HepG2 (cell line): ENCODE measurements at regions of chr1 and their contacts with region 1.

Region 1: GRCh38 chr1:237386362-237387143 is 344.6 kb downstream of the RYR2 start:
- DNase-seq: peak; percentile 17
- ATAC-seq: peak; percentile 30; the same call in 1 of the 3 replicates
- H3K4me3 ChIP-seq: no peak overlapping the region
- H3K27ac ChIP-seq: no peak overlapping the region
- H3K4me1 ChIP-seq: no peaks in the 10 kb centered on the region
- H3K27me3 ChIP-seq: peaks cover 0 to 2% of the 10 kb centered on the region in 2 experiments; a peak in 1 of 5 replicates
- CTCF ChIP-seq: peak; percentile 62
- EP300 ChIP-seq: no peak
- POLR2A ChIP-seq: no peak
- RAD21 ChIP-seq: peak; percentile 35; the same call in 1 of the 2 replicates

Region 2: DNA sequence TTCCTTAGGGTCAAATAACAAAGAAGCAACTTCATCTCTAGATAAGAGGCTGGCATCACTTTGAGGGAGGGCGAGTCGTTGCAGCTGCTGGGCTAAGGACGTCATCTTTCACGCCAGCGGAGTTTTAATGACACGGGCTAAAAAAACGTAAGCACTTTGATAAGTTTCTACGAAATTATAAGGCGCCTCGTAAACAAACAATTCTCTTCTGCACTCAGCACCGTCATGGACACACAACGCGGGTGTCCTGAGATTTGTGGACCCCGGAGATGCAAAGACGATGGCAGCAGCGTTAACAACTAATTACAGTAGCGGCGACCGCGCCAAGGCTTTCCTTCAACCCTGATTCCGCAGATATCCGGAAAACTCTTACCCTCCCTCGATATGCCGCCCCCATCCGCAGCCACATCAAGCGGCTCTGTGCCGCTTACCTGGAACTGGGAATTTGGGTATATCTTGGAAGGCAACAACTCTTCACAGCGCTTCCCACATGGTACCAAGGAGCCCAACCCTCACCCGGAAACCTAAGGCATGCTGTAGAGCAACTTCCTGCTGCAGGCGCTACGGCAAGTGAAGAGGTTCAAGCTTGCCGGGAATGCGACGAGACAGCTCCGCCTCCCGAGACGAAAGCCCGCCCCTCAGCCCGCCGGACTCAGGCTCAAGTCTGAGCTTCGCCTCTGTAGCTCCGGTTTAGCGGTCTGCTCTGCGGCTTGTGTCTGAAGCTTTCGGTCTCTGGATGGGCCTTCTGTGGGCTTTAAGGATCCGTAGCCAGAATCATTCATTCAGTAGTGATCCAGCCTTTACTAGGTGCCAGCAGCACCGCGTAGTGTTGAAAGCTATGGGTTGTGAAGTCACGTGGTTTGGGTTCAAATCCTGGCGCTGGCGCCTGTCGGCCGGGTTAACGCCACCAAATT is 782.3 kb before region 1 on chr1 and contains the start of gene HEATR1:
- CTCF ChIA-PET with region 1: interaction called, 17 read pairs
- POLR2A ChIA-PET with region 1: no interaction called
- in situ Hi-C with region 1: loop called (anchors 10 kb)
- intact Hi-C with region 1: loop called (anchors 1 kb)
- DNase-seq: peak; percentile 90
- ATAC-seq: peak; percentile 99
- H3K4me3 ChIP-seq: peak within 1 kb of the TSS; percentile 75 to 87 (median 82)
- H3K27ac ChIP-seq: peak within 1 kb of the TSS; percentile 54
- H3K4me1 ChIP-seq: peaks cover 15% of the 10 kb centered on the region
- H3K27me3 ChIP-seq: no peaks in the 10 kb centered on the region; a peak in 1 of 5 replicates
- CTCF ChIP-seq: no peak
- EP300 ChIP-seq: no peak; a peak in 1 of 4 replicates
- POLR2A ChIP-seq: peak; percentile 85
- RAD21 ChIP-seq: no peak
- total RNA-seq, gene HEATR1: 45.8 and 80.3 TPM in 2 replicates

Region 3: DNA sequence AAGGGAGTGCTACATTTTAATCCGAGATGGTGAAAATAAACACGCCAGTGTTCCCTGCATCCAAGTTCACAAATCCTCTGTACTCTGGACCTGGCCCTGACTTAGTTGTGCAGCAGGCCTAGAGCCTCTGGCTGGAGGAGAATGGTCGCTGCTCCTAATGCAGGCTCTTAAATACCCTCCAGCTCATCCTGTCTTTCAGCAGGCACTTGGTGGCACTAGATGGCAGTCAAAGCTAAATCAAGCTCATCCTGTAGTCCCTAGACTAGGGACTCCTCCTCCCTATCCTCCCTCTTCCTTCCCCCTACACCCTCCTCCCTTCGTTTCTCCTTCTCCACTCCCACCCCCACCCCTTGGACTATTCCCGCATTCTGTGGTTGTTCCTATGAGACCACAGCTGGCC is 633.0 kb before region 1 on chr1:
- CTCF ChIA-PET with region 1: interaction called, 6 read pairs
- POLR2A ChIA-PET with region 1: no interaction called
- in situ Hi-C with region 1: loop called (anchors 10 kb)
- intact Hi-C with region 1: loop called (anchors 2 kb)
- DNase-seq: peak; percentile 63
- ATAC-seq: peak; percentile 97
- H3K4me3 ChIP-seq: no peak overlapping the region
- H3K27ac ChIP-seq: no peak overlapping the region
- H3K4me1 ChIP-seq: peaks cover 16% of the 10 kb centered on the region
- H3K27me3 ChIP-seq: peaks cover 0 to 6% of the 10 kb centered on the region in 2 experiments; a peak in 1 of 5 replicates
- CTCF ChIP-seq: peak; percentile 86
- EP300 ChIP-seq: no peak
- POLR2A ChIP-seq: no peak
- RAD21 ChIP-seq: peak; percentile 67; the same call in 1 of the 2 replicates

Region 4: DNA sequence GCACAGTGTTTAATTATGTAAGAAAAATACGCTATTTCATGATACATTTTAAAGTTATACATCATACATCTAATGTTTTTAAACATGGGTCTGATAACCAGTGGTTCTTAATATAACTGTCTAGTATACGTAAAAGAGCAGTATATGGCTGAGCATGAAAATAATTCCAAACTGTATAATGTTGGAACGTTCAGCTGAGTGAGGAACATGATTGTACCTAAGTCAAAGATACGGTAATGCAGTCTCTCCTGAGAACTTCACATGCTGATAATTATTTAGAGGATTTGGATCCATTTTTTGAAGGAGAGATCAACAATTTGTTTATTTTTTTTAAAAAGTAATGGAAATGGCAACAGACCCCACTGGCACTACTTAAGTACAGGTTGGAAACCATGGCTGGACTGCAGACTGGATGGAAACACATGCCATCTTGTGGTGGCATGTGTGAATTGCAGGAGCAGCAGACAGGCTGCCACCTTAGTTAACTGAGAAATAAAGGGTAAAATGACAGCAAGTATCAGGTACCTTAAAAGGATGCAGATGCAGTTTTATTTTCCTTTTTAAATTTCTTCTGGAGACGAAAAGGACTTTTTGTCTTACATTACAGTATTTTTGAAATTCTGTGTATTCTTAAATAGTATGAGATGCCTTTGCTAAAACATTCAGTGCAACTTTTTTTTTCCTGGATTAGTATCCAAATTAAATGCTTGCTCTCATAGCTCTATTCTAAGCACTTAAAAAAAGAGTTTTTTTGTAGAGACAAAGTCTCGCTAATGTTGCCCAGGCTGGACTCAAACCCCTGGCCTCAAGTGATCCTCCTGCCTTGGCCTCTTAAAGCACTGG is 517.7 kb before region 1 on chr1:
- CTCF ChIA-PET with region 1: no interaction called
- POLR2A ChIA-PET with region 1: no interaction called
- in situ Hi-C with region 1: no loop called
- intact Hi-C with region 1: loop called (anchors 10 kb)
- DNase-seq: peak; percentile 60
- ATAC-seq: peak; percentile 93
- H3K4me3 ChIP-seq: no peak overlapping the region
- H3K27ac ChIP-seq: no peak overlapping the region
- H3K4me1 ChIP-seq: peaks cover 5% of the 10 kb centered on the region; the same call in 1 of the 2 replicates
- H3K27me3 ChIP-seq: no peaks in the 10 kb centered on the region
- CTCF ChIP-seq: peak; percentile 88
- EP300 ChIP-seq: no peak
- POLR2A ChIP-seq: no peak
- RAD21 ChIP-seq: peak; percentile 82

Region 5: GRCh38 chr1:236913371-236914037 is 473.0 kb before region 1 on chr1:
- CTCF ChIA-PET with region 1: no interaction called
- POLR2A ChIA-PET with region 1: no interaction called
- in situ Hi-C with region 1: no loop called
- intact Hi-C with region 1: no loop called
- DNase-seq: no peak
- ATAC-seq: no peak
- H3K4me3 ChIP-seq: no peak overlapping the region
- H3K27ac ChIP-seq: no peak overlapping the region
- H3K4me1 ChIP-seq: no peaks in the 10 kb centered on the region
- H3K27me3 ChIP-seq: no peaks in the 10 kb centered on the region
- CTCF ChIP-seq: no peak
- EP300 ChIP-seq: no peak
- POLR2A ChIP-seq: no peak
- RAD21 ChIP-seq: no peak

Region 6: GRCh38 chr1:237146241-237146640 is 240.3 kb before region 1 on chr1:
- CTCF ChIA-PET with region 1: no interaction called
- POLR2A ChIA-PET with region 1: no interaction called
- in situ Hi-C with region 1: no loop called
- intact Hi-C with region 1: no loop called
- DNase-seq: no peak
- ATAC-seq: no peak
- H3K4me3 ChIP-seq: no peak overlapping the region
- H3K27ac ChIP-seq: no peak overlapping the region
- H3K4me1 ChIP-seq: no peaks in the 10 kb centered on the region
- H3K27me3 ChIP-seq: peaks cover 0 to 8% of the 10 kb centered on the region in 2 experiments; a peak in 2 of 5 replicates
- CTCF ChIP-seq: no peak
- EP300 ChIP-seq: no peak
- POLR2A ChIP-seq: no peak
- RAD21 ChIP-seq: no peak

Region 7: DNA sequence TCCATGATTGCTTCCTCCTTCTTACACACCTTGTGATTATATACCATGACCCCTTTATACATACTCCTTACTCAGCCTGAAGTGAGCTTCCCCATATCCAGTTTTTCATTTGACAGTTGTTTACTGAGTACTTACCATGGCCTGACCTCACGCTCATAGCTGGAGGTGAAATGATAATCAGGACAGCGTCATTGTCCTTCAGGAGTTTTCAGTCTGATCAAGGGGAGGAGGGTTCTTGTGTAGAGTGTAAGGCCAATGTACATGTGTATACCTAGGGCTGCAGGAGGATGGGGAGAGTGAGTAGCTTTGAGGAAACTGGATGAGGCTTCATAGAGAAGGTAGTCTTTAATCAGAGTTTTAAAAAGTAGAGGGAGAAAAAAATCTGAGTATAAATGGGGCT is 18.8 kb before region 1 on chr1:
- CTCF ChIA-PET with region 1: no interaction called
- POLR2A ChIA-PET with region 1: no interaction called
- in situ Hi-C with region 1: no loop called
- intact Hi-C with region 1: no loop called
- DNase-seq: no peak
- ATAC-seq: no peak
- H3K4me3 ChIP-seq: no peak overlapping the region
- H3K27ac ChIP-seq: no peak overlapping the region
- H3K4me1 ChIP-seq: no peaks in the 10 kb centered on the region
- H3K27me3 ChIP-seq: no peaks in the 10 kb centered on the region
- CTCF ChIP-seq: no peak
- EP300 ChIP-seq: no peak
- POLR2A ChIP-seq: no peak
- RAD21 ChIP-seq: no peak